CD14-positive monocyte (primary cell): ENCODE measurements at regions of chr9 and their contacts with region 1.

Region 1: DNA sequence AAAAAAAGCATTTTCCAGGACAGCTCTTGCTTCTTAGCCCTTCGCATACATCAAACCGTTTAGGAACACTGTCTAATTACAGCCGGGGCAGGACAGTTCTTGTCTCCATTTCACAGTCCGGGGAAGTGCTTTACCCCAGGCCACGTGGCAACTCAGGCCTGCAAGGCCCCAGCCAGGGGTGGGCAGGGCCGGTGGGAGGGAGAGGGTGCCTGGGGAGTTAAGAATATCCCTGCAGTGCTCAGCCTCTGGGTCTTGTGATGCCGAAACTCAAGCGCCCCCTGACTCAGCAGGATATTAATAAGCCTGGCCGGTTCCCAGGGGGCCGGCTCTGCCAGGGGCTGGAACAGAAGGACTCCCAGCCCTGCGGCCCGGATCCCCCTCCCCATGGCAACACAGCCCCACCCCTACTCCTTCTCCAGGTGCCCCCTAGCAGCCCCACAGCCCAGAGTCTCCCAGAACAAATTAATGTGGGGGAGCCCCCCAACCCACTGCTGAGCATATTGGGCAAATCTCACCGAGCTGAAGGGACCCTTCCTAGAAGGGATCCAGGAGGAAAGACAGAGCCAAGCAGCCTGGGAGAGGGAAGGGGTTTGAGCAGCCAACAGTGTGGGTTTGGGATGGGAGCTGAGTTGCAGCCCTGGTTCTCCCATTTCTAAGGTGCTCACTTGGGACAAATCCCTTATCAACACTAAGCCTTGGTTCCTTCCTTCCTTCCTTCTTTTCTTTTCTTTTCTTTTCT is 45.3 kb downstream of the PLPP7 start:
- DNase-seq: no peak
- H3K4me3 ChIP-seq: no peak overlapping the region
- H3K4me3 Mint-ChIP-seq: no peak overlapping the region
- H3K27ac ChIP-seq: no peak overlapping the region
- H3K27ac Mint-ChIP-seq: no peak overlapping the region
- H3K4me1 ChIP-seq: no peaks in the 10 kb centered on the region
- H3K4me1 Mint-ChIP-seq: peaks cover 2% of the 10 kb centered on the region
- H3K27me3 ChIP-seq: no peaks in the 10 kb centered on the region
- H3K27me3 Mint-ChIP-seq: peaks cover 0 to 5% (median 3%) of the 10 kb centered on the region in 3 donors
- CTCF ChIP-seq: no peak

Region 2: DNA sequence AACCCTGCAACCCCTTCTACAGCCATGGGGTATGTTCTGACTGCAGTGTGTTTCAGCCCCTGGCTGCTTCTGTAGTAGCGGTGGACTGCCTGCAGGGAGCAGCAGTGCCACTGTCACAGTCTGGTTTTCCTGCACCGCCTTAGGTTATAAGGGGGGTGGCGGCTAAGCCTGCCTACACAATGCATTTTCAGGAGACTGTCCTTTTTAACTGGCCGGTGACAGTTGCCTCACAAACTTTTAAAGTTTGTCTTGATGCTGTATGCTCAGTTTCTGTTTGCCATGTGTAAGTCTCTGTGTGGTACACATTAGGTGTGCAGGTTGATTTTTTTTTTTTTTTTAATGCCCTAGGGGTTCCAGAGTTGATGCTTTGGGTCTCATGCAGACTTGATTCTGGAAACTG is 156.4 kb before region 1 on chr9:
- intact Hi-C with region 1: loop called (anchors 1 kb)
- DNase-seq: peak; percentile 50 to 69 (median 65)
- H3K4me3 ChIP-seq: no peak overlapping the region
- H3K4me3 Mint-ChIP-seq: no peak overlapping the region
- H3K27ac ChIP-seq: no peak overlapping the region
- H3K27ac Mint-ChIP-seq: no peak overlapping the region
- H3K4me1 ChIP-seq: peaks cover 0 to 6% of the 10 kb centered on the region in 2 donors
- H3K4me1 Mint-ChIP-seq: peaks cover 15% of the 10 kb centered on the region
- H3K27me3 ChIP-seq: no peaks in the 10 kb centered on the region
- H3K27me3 Mint-ChIP-seq: peaks cover 0 to 2% (median 0%) of the 10 kb centered on the region in 3 donors
- CTCF ChIP-seq: peak; percentile 99

Region 3: DNA sequence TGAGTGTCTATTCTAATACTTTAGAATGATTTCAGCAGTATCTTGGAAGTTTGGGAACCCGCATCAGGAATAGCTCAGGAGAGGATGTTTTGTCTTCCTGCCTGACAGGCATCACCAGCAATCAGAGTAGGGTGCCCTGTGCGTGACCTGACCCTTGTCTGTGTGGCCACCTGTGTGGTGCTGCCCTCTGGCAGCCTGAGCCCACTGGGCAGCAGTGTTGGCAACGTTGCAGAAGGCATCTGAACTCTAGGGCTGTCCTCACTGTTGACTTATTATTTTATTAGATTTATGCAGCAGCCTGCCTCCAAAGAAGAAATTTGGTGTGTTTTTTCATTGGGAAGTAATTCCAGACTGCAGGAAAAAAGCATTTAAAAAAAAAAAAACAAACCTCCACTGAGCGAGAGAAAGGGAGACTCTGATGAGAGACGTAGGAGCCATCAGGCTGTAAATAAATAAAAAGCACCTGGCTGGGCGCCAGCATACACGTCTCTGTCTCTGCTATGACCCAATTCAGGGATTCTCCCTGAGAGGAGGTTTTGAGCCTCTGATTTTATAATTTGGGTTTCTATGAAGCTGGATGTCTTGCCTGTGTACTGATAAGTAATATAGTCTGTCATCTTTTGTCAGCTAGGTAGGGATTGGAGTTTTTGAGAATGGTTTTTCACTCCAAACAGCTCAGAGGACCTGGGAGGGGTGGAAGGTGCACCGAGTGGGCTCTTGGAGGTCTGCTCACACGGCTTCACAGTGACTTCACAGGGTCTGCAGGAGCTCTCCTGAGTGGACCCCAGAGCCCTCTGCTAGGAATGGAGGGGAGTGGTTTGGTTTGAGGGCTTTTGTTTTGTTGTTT is 107.5 kb before region 1 on chr9:
- intact Hi-C with region 1: no loop called
- DNase-seq: peak; percentile 54 to 82 (median 73)
- H3K4me3 ChIP-seq: peak overlapping the region; percentile 85 to 94 (median 85)
- H3K4me3 Mint-ChIP-seq: peak overlapping the region; percentile 86 to 99
- H3K27ac ChIP-seq: peak overlapping the region; percentile 57 to 93
- H3K27ac Mint-ChIP-seq: peak overlapping the region; percentile 86 to 97 (median 93)
- H3K4me1 ChIP-seq: peaks cover 46 to 51% of the 10 kb centered on the region in 2 donors
- H3K4me1 Mint-ChIP-seq: peaks cover 70% of the 10 kb centered on the region
- H3K27me3 ChIP-seq: no peaks in the 10 kb centered on the region
- H3K27me3 Mint-ChIP-seq: no peaks in the 10 kb centered on the region
- CTCF ChIP-seq: no peak